Ascending aorta (tissue), 2 donors: ENCODE measurements at regions of chr4 and their contacts with region 1.

Region 1: GRCh38 chr4:66949419-66949818 is 595.9 kb downstream of the CENPC start:
- DNase-seq: no peak
- H3K4me3 ChIP-seq: no peak overlapping the region
- H3K27ac ChIP-seq: no peak overlapping the region
- H3K4me1 ChIP-seq: no peaks in the 10 kb centered on the region
- H3K27me3 ChIP-seq: no peaks in the 10 kb centered on the region
- CTCF ChIP-seq: no peak

Region 2: GRCh38 chr4:66736606-66737005 is 212.8 kb before region 1 on chr4:
- intact Hi-C with region 1: loop called (anchors 5 kb)
- DNase-seq: no peak
- H3K4me3 ChIP-seq: no peak overlapping the region
- H3K27ac ChIP-seq: no peak overlapping the region
- H3K4me1 ChIP-seq: no peaks in the 10 kb centered on the region
- H3K27me3 ChIP-seq: no peaks in the 10 kb centered on the region
- CTCF ChIP-seq: no peak

Region 3: GRCh38 chr4:67035501-67035900 is 86.1 kb after region 1 on chr4:
- intact Hi-C with region 1: no loop called
- DNase-seq: no peak
- H3K4me3 ChIP-seq: no peak overlapping the region
- H3K27ac ChIP-seq: no peak overlapping the region
- H3K4me1 ChIP-seq: no peaks in the 10 kb centered on the region
- H3K27me3 ChIP-seq: no peaks in the 10 kb centered on the region
- CTCF ChIP-seq: no peak

Region 4: DNA sequence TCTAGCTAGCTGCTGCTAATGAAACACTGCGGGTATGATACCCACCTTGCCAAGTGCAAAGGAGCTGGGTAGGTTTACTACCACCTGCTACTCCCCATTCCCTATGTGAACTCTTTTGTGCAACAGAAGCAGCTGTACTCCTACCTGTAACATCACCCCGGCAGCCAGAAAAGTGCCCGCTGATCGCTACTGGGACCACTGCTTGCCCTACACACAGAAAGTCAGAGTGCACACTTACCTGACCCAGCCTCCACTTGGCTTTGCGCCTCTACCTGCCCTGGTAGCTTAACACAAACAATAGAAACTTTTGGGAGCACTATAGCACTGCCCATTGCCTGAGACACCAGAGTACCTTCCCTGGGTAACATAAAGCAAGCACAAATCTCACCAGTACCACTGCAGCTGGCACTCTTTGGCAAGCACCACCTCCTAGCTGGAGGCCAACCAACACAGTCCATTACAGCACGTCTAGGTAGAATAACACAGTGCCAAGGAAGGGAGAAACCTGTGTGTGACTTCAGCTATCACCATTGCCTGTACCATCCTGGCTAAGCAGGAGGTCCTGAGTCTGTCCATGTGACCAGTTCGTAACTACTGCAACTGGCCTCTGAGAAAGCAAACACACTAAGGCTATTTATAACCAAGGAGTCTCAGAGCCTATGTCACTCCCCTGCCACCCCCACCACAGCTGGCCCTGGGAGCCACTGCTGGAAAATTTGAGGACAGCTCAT is 515.8 kb after region 1 on chr4:
- intact Hi-C with region 1: no loop called
- DNase-seq: no peak
- H3K4me3 ChIP-seq: no peak overlapping the region
- H3K27ac ChIP-seq: no peak overlapping the region
- H3K4me1 ChIP-seq: no peaks in the 10 kb centered on the region
- H3K27me3 ChIP-seq: no peaks in the 10 kb centered on the region
- CTCF ChIP-seq: no peak